ENCODE measurements at regions of chr7 and their contacts with region 1.

Region 1: DNA sequence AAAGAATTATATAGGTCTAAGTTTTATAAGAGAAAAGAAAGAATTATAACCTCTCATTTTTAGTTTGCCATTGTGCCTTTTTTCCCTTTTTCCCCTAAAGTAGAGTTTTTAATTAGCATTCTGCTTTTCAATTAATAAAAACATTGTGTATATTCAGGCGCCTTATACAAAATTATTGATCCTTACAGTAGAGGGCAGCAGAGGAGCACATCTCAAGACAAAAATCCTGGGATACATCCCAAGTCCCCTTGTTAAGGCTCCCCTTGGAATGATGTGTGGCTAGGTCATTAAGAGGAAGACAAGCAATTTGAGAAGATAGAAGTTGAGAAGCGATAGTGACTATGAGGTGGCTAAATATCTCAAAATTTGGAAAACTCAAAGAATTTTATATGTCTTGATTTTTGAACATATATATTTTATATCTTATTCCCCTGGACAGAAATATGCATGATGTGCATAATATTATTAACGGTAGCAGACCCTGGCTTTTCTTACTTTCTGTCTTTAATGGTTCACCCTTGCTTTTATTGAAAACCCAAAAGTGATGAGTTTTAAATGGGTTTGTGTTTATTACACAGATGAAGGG is 19.1 kb upstream of the TPK1 start:
- DNase-seq: no peak

Region 2: GRCh38 chr7:146106319-146106718 is 1251.4 kb after region 1 on chr7:
- intact Hi-C with region 1: loop called in 1 of 2 experiments (anchors 10 kb)
- DNase-seq: no peak